Endothelial cell of umbilical vein (primary cell): ENCODE measurements at regions of chr11 and their contacts with region 1.

Region 1: GRCh38 chr11:93543292-93543977 is at the start of gene SMCO4:
- DNase-seq: peak; percentile 76
- H3K4me3 ChIP-seq: peak within 1 kb of the TSS; percentile 68 to 74 (median 69)
- H3K27ac ChIP-seq: no peak within 1 kb of the TSS
- H3K4me1 ChIP-seq: peaks cover 13% of the 10 kb centered on the region
- H3K27me3 ChIP-seq: peaks cover 5 to 17% of the 10 kb centered on the region in 2 experiments
- CTCF ChIP-seq: peak; percentile 41 to 83
- POLR2A ChIP-seq: no peak
- total RNA-seq, gene SMCO4: 19.9 and 21.3 TPM in 2 replicates

Region 2: GRCh38 chr11:93197380-93198214 is 345.8 kb before region 1 on chr11 and contains the start of gene SLC36A4:
- CTCF ChIA-PET with region 1: no interaction called
- POLR2A ChIA-PET with region 1: no interaction called
- dilution Hi-C with region 1: no loop called
- intact Hi-C with region 1: loop called (anchors 1 kb)
- DNase-seq: peak; percentile 96
- H3K4me3 ChIP-seq: peak within 1 kb of the TSS; percentile 70 to 95 (median 82)
- H3K27ac ChIP-seq: peak within 1 kb of the TSS; percentile 95
- H3K4me1 ChIP-seq: peaks cover 4% of the 10 kb centered on the region
- H3K27me3 ChIP-seq: peaks cover 6 to 8% of the 10 kb centered on the region in 2 experiments
- CTCF ChIP-seq: no peak
- POLR2A ChIP-seq: peak; percentile 84
- total RNA-seq, gene SLC36A4: 16.8 and 21.7 TPM in 2 replicates

Region 3: GRCh38 chr11:93330446-93330984 is 212.9 kb before region 1 on chr11 and contains the start of gene DEUP1:
- CTCF ChIA-PET with region 1: no interaction called
- POLR2A ChIA-PET with region 1: no interaction called
- dilution Hi-C with region 1: no loop called
- intact Hi-C with region 1: loop called (anchors 10 kb)
- DNase-seq: peak; percentile 1
- H3K4me3 ChIP-seq: no peak within 1 kb of the TSS
- H3K27ac ChIP-seq: no peak within 1 kb of the TSS
- H3K4me1 ChIP-seq: no peaks in the 10 kb centered on the region
- H3K27me3 ChIP-seq: peaks cover 9 to 15% of the 10 kb centered on the region in 2 experiments
- CTCF ChIP-seq: no peak
- POLR2A ChIP-seq: no peak
- total RNA-seq, gene DEUP1: not detected in 2 replicates

Region 4: GRCh38 chr11:93532281-93532789 is 11.1 kb before region 1 on chr11:
- CTCF ChIA-PET with region 1: interaction called, 12 read pairs
- POLR2A ChIA-PET with region 1: no interaction called
- dilution Hi-C with region 1: no loop called
- intact Hi-C with region 1: no loop called
- DNase-seq: no peak
- H3K4me3 ChIP-seq: no peak overlapping the region
- H3K27ac ChIP-seq: no peak overlapping the region
- H3K4me1 ChIP-seq: peaks cover 10% of the 10 kb centered on the region
- H3K27me3 ChIP-seq: no peaks in the 10 kb centered on the region
- CTCF ChIP-seq: no peak
- POLR2A ChIP-seq: no peak

Region 5: DNA sequence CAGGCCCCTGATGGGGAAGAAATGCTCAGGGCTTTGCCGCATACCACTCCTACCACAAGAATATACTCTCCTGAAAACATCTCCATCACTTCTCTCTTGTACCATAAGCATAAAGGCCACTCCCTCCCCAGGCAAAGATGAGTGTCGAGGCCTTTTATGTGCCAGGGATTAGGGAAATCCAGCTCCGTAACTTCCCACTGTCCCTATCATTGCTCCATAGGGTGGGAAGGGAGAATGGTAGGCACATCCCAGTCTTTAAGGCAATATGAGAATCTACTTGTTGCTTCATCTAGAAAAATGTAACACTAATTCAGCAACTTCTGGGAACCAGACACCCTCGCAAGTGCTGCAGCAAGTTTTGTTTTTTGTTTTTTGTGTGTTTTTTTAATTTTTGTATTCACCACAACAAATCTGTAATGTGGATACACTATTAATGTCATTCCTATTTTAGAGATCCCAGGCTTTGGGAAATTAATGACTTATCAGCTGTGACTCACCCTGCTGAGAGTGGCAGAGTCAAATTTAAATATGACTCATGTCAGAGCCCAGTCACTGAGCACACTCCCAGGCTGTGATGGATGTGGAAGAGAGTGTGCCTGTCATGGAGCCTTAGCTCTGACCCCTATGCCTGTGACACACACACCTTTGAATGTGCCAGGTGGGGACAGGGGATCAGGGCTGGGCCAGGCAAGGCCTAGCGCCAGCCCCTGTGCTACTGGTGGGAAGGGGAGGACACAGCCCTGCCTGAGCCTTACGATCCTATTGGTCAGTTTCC is 608.7 kb after region 1 on chr11:
- CTCF ChIA-PET with region 1: no interaction called
- POLR2A ChIA-PET with region 1: no interaction called
- dilution Hi-C with region 1: no loop called
- intact Hi-C with region 1: loop called (anchors 5 kb)
- DNase-seq: peak; percentile 81
- H3K4me3 ChIP-seq: no peak overlapping the region
- H3K27ac ChIP-seq: peak overlapping the region; percentile 34
- H3K4me1 ChIP-seq: peaks cover 34% of the 10 kb centered on the region
- H3K27me3 ChIP-seq: no peaks in the 10 kb centered on the region
- CTCF ChIP-seq: no peak
- POLR2A ChIP-seq: no peak

Region 6: GRCh38 chr11:94303966-94304958 is 760.8 kb after region 1 on chr11 and contains the start of gene IZUMO1R:
- CTCF ChIA-PET with region 1: no interaction called
- POLR2A ChIA-PET with region 1: no interaction called
- dilution Hi-C with region 1: no loop called
- intact Hi-C with region 1: no loop called
- DNase-seq: peak; percentile 18
- H3K4me3 ChIP-seq: no peak within 1 kb of the TSS
- H3K27ac ChIP-seq: no peak within 1 kb of the TSS
- H3K4me1 ChIP-seq: no peaks in the 10 kb centered on the region
- H3K27me3 ChIP-seq: no peaks in the 10 kb centered on the region
- CTCF ChIP-seq: no peak
- POLR2A ChIP-seq: no peak
- total RNA-seq, gene IZUMO1R: not detected in 2 replicates